ENCODE measurements at regions of chr22 and their contacts with region 1.

Region 1: DNA sequence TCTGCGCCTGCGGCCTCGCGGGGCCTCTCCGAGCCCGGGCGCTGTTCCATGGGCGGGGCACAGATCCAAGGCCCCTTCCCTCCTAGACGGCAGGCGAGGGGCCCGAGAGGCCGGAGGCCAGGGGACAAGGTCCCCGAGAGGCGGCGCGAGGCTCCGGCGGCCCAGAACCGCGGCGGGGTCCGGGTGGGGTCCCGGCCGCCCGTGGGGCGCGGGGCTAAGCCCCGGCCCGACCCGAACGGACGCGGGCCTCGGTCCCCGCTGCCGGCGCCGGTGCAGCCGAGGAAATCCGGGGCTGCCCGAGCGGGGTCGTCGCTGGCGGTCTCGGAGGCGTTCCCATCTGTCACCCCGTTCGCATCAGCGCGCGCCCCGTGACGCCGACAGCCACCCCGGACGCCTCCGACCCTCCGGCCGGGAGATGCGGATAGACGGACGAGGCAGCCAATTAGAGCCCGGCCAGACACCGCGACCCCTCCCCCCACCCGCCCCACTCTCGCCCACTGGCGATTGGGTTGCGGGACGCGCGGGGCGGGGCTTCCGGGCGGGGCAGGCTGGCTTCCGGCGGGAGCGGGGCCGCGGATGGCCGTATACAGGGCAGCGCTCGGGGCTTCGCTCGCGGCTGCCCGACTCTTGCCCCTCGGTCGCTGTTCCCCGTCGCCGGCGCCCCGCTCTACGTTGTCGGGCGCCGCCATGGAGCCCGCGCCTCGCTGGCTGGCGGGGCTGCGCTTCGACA is at the start of gene SELENOO:
- DNase-seq: peak; percentile 66 to 93
- H3K4me3 ChIP-seq: peak within 1 kb of the TSS; percentile 76 to 88
- H3K27ac ChIP-seq: peak within 1 kb of the TSS; percentile 68 to 80
- H3K4me1 ChIP-seq: peaks cover 13 to 14% of the 10 kb centered on the region in 2 donors
- H3K27me3 ChIP-seq: no peaks in the 10 kb centered on the region
- CTCF ChIP-seq: no peak
- total RNA-seq, gene SELENOO: 41.7 TPM

Region 2: DNA sequence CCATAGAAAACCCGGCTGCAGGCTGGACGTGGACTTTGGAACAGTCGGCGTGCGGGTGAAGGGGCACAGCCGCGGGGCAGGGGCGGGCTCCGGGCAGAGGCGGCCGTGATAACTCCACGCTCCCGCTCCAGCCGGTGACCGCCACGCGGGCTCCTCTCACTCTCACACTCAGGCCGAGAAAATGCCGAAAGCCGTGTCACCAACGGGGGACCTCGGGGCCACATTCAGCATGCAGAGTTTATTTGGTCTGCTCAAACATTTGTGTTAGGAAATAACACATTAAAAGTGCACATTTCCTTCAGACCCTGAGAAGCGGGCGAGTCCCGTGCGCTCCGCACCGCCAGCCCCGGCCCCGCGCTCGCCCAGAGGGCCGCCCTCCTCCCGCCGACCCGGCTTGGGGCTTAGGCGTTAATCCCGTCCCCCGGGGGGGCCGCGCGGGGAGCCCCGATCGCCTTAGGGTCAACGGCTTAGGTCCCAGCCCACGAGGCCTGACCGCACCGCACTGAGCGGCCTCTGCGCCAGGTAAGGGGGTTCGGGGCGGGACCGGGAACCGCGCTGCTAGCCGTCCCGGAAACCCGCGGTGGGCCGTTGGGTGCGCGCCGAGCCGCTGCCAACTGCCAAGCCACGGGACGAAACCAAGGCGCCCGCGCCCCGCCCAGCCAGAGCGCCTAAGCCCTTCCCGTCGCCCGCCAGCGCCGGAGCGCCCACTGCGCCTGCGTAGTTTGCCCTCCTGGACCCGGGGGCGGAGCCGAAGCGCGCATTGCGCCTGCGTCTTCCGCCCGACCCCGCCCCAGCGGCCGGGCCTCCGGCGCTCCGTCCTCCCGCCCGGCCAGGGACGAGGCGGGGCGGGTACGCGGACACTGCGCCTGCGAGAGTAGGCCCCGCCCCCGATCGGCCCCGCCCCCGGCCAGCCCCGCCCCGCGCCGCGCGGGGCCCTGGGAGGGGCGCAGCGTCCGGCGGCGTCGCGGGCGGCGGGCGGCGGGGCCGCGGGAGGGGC is 347.4 kb before region 1 on chr22 and contains the start of gene ZBED4:
- intact Hi-C with region 1: loop called (anchors 5 kb)
- DNase-seq: peak; percentile 84 to 98
- H3K4me3 ChIP-seq: peak within 1 kb of the TSS; percentile 77 to 87
- H3K27ac ChIP-seq: peak within 1 kb of the TSS; percentile 79 to 84
- H3K4me1 ChIP-seq: peaks cover 9 to 30% of the 10 kb centered on the region in 2 donors
- H3K27me3 ChIP-seq: peaks cover 17% of the 10 kb centered on the region
- CTCF ChIP-seq: no peak
- total RNA-seq, gene ZBED4: 10.1 TPM

Region 3: DNA sequence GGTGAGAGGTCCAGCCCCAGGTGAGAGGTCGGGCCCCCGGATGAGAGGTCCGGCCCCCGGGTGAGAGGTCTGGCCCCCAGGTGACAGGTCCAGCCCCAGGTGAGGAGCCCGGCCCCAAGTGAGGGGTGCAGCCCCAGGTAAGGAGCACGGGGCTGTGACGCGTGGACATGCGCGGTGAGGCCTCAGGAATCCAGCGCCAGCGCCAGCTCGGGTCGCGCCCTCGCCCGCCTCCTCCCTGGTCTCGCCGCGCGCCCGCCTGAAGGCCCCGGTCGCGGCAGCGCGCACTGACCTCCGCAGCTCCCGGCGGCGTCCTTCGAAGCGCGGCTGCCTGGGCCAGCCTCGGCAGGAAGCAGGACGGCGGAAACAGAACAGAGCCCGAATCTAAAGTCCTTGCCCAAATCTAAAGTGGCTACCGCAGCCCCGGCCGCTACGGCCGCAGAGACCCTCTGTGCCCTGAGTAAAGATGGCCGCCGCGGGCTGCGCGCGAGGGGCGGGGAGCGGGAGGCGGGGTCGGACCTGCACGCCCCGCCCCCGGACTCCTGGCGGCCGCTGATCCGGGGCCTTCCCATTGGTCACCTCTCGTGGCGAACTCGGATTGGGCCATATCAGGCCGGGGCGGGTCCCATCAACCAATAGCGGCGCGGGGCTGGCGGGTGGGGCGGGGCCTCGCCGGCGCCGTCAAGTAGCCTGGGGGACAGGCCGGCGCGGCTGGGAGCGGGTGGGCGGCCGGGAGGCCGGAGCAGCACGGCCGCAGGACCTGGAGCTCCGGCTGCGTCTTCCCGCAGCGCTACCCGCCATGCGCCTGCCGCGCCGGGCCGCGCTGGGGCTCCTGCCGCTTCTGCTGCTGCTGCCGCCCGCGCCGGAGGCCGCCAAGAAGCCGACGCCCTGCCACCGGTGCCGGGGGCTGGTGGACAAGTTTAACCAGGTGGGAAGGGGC is 282.4 kb before region 1 on chr22 and contains the starts of genes ALG12 and CRELD2:
- intact Hi-C with region 1: loop called (anchors 2 kb)
- DNase-seq: peak; percentile 94 to 99
- H3K4me3 ChIP-seq: peak within 1 kb of the TSS; percentile 76 to 90
- H3K27ac ChIP-seq: peak within 1 kb of the TSS; percentile 95
- H3K4me1 ChIP-seq: peaks cover 0 to 12% of the 10 kb centered on the region in 2 donors
- H3K27me3 ChIP-seq: no peaks in the 10 kb centered on the region
- CTCF ChIP-seq: no peak
- total RNA-seq, gene ALG12: 6.9 TPM
- total RNA-seq, gene CRELD2: 61.8 TPM

Region 4: DNA sequence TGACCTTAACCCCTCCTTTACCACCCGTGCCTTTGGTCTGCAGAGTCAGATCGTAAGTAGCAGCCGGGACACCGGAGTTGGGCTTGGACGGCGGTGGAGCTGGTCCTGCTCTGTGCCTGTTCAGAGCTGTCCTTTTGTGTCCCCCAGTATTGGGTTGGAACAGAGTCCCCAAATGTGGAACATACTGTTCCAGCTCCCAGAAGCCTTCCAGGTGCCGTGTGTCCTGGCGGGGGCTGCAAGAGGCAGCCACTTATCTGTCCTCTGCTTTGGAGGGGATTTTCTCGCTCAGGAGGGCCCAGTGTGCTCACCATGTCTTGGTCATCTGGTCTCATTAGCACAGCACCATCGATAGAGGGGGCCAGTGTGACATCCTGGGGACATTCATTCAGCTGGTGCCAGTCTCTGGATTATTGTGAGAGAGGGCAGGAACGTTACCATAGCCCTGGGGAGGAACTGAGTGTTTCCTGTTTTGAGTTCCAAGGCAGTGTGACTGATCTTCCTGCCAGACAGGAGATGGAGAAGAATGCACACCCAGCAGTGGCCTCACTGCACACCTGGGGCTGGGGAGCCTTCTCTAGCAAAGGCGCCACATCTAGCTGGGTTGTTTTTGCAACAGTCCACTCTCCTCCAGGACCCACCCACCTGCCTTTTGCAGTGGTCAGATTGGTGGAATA is 269.8 kb before region 1 on chr22:
- intact Hi-C with region 1: loop called (anchors 5 kb)
- DNase-seq: peak; percentile 51 to 89
- H3K4me3 ChIP-seq: no peak overlapping the region
- H3K27ac ChIP-seq: no peak overlapping the region
- H3K4me1 ChIP-seq: peaks cover 8 to 27% of the 10 kb centered on the region in 2 donors
- H3K27me3 ChIP-seq: no peaks in the 10 kb centered on the region
- CTCF ChIP-seq: peak; percentile 55 to 72 (median 57)

Region 5: GRCh38 chr22:50118557-50119168 is 82.0 kb before region 1 on chr22:
- intact Hi-C with region 1: no loop called
- DNase-seq: peak in 1 of 2 donors; percentile 71
- H3K4me3 ChIP-seq: no peak overlapping the region
- H3K27ac ChIP-seq: peak overlapping the region in 1 of 2 donors; percentile 53
- H3K4me1 ChIP-seq: peaks cover 0 to 12% of the 10 kb centered on the region in 2 donors
- H3K27me3 ChIP-seq: no peaks in the 10 kb centered on the region
- CTCF ChIP-seq: no peak

Region 6: DNA sequence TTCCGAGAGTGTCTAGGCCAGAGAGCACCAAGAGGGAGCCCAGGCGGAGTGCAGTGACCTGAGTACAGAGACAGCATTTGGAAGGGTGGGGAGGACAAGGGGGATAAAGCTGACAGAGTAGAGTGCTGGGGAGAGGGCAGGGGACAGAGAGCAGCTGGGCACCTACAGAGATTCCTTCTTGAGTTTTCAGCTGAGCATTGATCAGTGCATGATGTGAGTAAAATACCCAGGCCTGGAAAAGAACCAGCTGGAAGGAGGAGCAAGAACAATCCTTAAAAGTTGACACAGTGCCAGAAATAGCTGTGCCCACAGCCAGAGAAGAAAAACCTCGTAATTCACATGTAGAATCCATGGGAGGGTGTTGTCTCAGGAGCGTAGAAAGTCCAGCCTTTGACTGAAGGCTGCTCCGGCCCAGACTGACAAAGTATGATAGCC is 64.0 kb before region 1 on chr22:
- intact Hi-C with region 1: no loop called
- DNase-seq: no peak
- H3K4me3 ChIP-seq: no peak overlapping the region
- H3K27ac ChIP-seq: no peak overlapping the region
- H3K4me1 ChIP-seq: peaks cover 0 to 3% of the 10 kb centered on the region in 2 donors
- H3K27me3 ChIP-seq: no peaks in the 10 kb centered on the region
- CTCF ChIP-seq: no peak

Region 7: DNA sequence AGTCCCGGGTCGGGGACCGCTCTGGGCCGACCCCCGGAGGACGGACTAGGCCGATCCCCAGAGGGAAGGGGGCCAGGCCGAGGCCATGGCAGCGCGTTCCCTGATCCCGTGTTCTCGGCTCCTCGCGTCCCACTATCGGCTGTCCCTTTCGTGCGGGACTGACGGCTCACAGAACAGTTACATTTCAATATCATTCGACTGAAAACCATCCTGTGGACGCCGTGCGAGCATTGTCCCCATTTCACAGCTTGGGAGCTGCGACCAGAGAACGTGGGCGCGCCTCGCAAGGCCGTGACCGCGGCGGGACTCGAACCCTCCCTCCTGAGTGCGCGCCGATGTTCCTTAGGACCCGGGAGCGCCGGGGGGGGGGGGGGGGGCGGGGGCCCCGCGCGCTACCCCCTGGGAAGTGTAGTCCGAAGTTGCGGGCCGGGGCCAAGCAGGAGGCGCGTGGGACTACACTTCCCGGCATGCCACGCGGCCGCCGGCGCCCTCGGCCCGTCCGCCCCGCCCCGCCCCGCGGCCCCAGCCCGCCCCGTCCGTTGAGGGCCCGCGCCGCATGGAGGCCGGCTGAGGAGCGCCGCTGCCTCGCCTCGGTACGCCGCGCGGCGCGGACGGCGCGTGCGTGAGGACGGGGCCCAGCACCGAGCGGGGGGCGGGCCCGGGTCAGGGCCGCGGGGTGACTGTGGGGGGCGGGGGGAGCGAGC is 15.1 kb before region 1 on chr22 and contains the start of gene TRABD:
- intact Hi-C with region 1: loop called (anchors 1 kb)
- DNase-seq: peak in 1 of 2 donors; percentile 92
- H3K4me3 ChIP-seq: peak within 1 kb of the TSS; percentile 72 to 77
- H3K27ac ChIP-seq: peak within 1 kb of the TSS; percentile 42 to 67
- H3K4me1 ChIP-seq: peaks cover 5 to 33% of the 10 kb centered on the region in 2 donors
- H3K27me3 ChIP-seq: no peaks in the 10 kb centered on the region
- CTCF ChIP-seq: no peak
- total RNA-seq, gene TRABD: 91.4 TPM

Region 8: GRCh38 chr22:50244420-50245213 is 44.0 kb after region 1 on chr22 and contains the start of gene TUBGCP6:
- intact Hi-C with region 1: loop called (anchors 5 kb)
- DNase-seq: peak; percentile 63 to 98
- H3K4me3 ChIP-seq: peak within 1 kb of the TSS; percentile 70 to 91
- H3K27ac ChIP-seq: peak within 1 kb of the TSS; percentile 92 to 95
- H3K4me1 ChIP-seq: peaks cover 14 to 35% of the 10 kb centered on the region in 2 donors
- H3K27me3 ChIP-seq: no peaks in the 10 kb centered on the region
- CTCF ChIP-seq: peak in 1 of 3 experiments; percentile 11
- total RNA-seq, gene TUBGCP6: 58.1 TPM

Measured in ascending aorta (tissue), 2 donors.